Activated T-helper 1 cell treated with anti-CD3 and anti-CD28 coated beads, Interleukin-12 subunit alpha, Interleukin-12 subunit beta, Interleukin-2, Interleukin-4 antibody, amounts not matched to agents 30 ng/mL and 10 ng/mL and 1 ng/mL, durations not matched to agents 14 hours and 24 hours and 36 hours (primary cell): ENCODE measurements at regions of chr1 and their contacts with region 1.

Region 1: DNA sequence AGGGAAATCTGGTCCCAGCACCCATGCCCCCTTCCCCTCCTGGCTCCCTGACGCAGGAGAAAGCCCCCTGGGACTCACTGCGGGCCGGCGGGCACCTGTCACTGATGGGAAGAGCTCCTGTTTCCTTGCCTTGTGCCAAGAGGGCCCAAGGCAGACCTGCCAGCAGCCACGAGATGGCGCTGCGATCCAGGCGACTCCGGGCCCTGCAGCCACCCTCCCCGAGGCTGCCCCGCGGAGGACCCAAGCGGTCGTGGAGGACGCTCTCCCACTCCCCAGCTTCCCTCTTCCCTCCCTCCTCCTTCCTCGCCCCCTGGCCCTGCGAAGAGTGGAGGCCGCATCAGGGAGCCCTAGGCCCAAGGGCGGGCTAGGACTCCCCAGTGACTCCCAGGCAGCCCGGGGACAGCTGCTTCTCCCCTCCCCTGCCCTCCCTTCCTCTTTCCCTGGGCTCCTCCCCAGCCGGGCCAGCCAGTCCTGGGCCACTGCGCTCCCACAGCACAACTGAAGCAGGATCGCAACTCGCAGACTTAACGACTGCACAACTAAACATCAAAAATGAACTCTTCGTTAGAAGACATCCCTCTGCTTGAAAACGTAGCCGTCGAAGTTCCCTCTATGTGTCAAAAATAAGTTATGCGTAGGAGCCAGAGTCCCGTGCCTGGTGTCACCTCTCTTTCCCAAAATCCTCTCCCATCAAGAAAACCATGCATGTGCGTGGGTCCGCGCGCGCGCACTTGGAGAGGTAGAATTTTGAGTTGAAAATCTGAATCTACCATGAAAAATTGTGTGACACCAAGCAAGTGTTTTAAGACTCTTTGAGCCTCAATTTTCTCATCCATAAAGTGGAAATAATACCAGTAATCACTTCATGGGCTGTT is 34.2 kb downstream of the BATF3 start:
- DNase-seq: peak; percentile 74
- H3K4me3 Mint-ChIP-seq: peak overlapping the region; percentile 82
- H3K27ac Mint-ChIP-seq: peak overlapping the region; percentile 70
- H3K4me1 Mint-ChIP-seq: peaks cover 24% of the 10 kb centered on the region
- H3K27me3 Mint-ChIP-seq: peaks cover 13% of the 10 kb centered on the region

Region 2: DNA sequence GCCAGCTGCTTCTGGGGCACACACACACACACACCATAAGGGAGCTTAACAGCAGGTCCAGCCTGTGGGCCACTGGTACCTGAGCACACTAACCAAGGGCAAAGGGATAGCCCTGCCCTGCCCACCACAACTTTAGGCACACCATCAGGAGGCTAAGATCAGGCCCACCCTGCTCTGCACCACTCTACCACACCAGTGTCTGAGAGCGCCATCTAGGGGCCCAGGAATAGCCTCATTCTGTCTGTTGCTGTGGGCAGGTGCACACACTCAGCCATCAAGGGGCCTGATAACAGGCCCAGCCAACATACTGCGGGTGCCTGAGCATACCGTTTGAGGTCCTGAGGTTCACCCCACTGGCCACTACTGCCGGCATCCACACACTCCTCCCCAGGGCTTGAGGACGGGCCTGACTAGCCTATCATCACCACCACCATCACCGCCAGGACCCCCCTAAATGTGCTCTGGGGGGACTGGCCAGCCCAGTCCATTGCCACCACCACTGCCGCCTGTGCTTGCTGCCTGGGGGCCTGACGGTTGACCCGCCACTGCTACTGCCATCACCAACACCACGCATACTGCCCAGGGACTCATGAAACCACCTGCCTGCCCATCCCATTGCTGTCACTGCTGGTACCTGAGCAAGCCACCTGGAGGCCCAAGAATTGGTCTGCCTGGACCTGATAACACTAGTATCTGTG is 94.8 kb after region 1 on chr1:
- intact Hi-C with region 1: loop called (anchors 1 kb)
- DNase-seq: peak; percentile 24
- H3K4me3 Mint-ChIP-seq: no peak overlapping the region
- H3K27ac Mint-ChIP-seq: no peak overlapping the region
- H3K4me1 Mint-ChIP-seq: peaks cover 17% of the 10 kb centered on the region
- H3K27me3 Mint-ChIP-seq: no peaks in the 10 kb centered on the region

Region 3: GRCh38 chr1:212782422-212783154 is 117.1 kb after region 1 on chr1:
- intact Hi-C with region 1: loop called (anchors 1 kb)
- DNase-seq: no peak
- H3K4me3 Mint-ChIP-seq: no peak overlapping the region
- H3K27ac Mint-ChIP-seq: no peak overlapping the region
- H3K4me1 Mint-ChIP-seq: peaks cover 4% of the 10 kb centered on the region
- H3K27me3 Mint-ChIP-seq: no peaks in the 10 kb centered on the region